ENCODE measurements at regions of chr2 and their contacts with region 1.

Region 1: GRCh38 chr2:28452534-28453081 is 43.3 kb upstream of the PLB1 start:
- DNase-seq: peak; percentile 72 to 84
- H3K4me3 ChIP-seq: no peak overlapping the region
- H3K4me3 Mint-ChIP-seq: no peak overlapping the region
- H3K27ac Mint-ChIP-seq: no peak overlapping the region
- H3K4me1 ChIP-seq: 0 out of 2 replicates have a peak, but pooled peaks cover 4% of the 10 kb centered on the region
- H3K4me1 Mint-ChIP-seq: peaks cover 13% of the 10 kb centered on the region
- H3K27me3 ChIP-seq: no peaks in the 10 kb centered on the region
- H3K27me3 Mint-ChIP-seq: no peaks in the 10 kb centered on the region
- CTCF ChIP-seq: peak; percentile 90 to 94

Region 2: GRCh38 chr2:27807476-27807875 is 645.1 kb before region 1 on chr2:
- CTCF ChIA-PET with region 1: no interaction called
- POLR2A ChIA-PET with region 1: no interaction called
- intact Hi-C with region 1: loop called (anchors 5 kb)
- DNase-seq: peak; percentile 55 to 59
- H3K4me3 ChIP-seq: no peak overlapping the region
- H3K4me3 Mint-ChIP-seq: no peak overlapping the region
- H3K27ac Mint-ChIP-seq: no peak overlapping the region
- H3K4me1 ChIP-seq: peaks cover 16% of the 10 kb centered on the region; the same call in 1 of the 2 replicates
- H3K4me1 Mint-ChIP-seq: no peaks in the 10 kb centered on the region
- H3K27me3 ChIP-seq: no peaks in the 10 kb centered on the region
- H3K27me3 Mint-ChIP-seq: no peaks in the 10 kb centered on the region
- CTCF ChIP-seq: peak; percentile 48 to 66

Region 3: DNA sequence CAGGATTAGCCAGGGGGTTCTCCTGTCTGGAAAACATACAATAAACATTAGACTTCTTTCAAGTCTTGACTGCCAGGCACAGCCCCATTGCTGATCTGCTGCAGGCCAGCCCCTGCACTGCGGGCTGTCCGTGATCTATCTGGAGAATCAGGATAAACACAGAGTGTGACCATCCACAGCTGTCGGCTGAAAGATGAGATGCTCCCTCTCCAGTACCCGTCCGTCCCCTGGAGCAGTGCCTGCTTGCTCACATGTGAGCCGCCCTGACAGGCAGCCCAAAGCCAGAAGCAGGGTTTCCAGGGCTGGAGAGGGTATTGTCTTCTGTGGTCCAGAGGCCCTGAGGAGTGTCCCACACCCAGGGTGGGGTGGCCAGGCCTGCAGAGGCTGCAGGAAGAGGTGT is 106.0 kb before region 1 on chr2:
- CTCF ChIA-PET with region 1: no interaction called
- POLR2A ChIA-PET with region 1: no interaction called
- intact Hi-C with region 1: no loop called
- DNase-seq: no peak
- H3K4me3 ChIP-seq: no peak overlapping the region
- H3K4me3 Mint-ChIP-seq: no peak overlapping the region
- H3K27ac Mint-ChIP-seq: no peak overlapping the region
- H3K4me1 ChIP-seq: peaks cover 15% of the 10 kb centered on the region
- H3K4me1 Mint-ChIP-seq: peaks cover 13% of the 10 kb centered on the region
- H3K27me3 ChIP-seq: no peaks in the 10 kb centered on the region
- H3K27me3 Mint-ChIP-seq: no peaks in the 10 kb centered on the region
- CTCF ChIP-seq: no peak

Region 4: DNA sequence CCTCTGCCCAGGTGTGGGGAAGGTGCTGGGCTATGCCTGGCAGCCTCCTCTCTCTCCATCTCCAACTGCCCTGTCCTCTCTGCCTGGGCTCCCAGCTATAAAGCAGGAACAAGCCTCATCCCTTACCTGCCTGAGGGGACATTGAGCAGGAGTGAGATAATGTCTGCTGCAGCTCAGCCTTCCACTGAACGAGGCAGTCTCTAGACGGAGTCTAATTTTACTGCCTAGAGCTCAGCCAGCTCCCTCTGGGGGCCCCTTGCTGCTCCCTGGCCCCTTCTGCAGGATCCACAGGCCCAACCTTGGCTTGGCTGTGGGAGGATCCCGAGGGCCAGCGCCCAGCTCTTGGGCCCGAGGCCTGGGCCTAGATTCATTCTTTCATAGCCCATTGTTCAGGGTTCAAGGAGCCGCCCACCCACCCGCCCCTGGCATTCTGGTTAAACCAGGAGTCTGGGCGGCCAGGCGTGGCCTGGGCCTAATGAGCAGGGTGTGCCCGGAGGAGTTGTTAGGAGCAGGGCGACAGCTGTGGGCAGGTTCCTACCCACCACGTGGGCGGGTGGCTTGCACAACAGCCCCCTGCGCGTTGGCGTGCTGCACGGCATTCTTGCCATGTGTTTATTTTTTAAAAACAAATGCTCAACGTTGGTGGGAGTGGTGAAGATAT is 15.3 kb before region 1 on chr2:
- CTCF ChIA-PET with region 1: no interaction called
- POLR2A ChIA-PET with region 1: no interaction called
- intact Hi-C with region 1: no loop called
- DNase-seq: no peak
- H3K4me3 ChIP-seq: no peak overlapping the region
- H3K4me3 Mint-ChIP-seq: no peak overlapping the region
- H3K27ac Mint-ChIP-seq: no peak overlapping the region
- H3K4me1 ChIP-seq: peaks cover 33% of the 10 kb centered on the region
- H3K4me1 Mint-ChIP-seq: peaks cover 15% of the 10 kb centered on the region
- H3K27me3 ChIP-seq: no peaks in the 10 kb centered on the region
- H3K27me3 Mint-ChIP-seq: no peaks in the 10 kb centered on the region
- CTCF ChIP-seq: no peak